Activated B cell treated with CpG ODN at 0.5 μM for 24 hours (primary cell): ENCODE measurements at regions of chr9 and their contacts with region 1.

Region 1: DNA sequence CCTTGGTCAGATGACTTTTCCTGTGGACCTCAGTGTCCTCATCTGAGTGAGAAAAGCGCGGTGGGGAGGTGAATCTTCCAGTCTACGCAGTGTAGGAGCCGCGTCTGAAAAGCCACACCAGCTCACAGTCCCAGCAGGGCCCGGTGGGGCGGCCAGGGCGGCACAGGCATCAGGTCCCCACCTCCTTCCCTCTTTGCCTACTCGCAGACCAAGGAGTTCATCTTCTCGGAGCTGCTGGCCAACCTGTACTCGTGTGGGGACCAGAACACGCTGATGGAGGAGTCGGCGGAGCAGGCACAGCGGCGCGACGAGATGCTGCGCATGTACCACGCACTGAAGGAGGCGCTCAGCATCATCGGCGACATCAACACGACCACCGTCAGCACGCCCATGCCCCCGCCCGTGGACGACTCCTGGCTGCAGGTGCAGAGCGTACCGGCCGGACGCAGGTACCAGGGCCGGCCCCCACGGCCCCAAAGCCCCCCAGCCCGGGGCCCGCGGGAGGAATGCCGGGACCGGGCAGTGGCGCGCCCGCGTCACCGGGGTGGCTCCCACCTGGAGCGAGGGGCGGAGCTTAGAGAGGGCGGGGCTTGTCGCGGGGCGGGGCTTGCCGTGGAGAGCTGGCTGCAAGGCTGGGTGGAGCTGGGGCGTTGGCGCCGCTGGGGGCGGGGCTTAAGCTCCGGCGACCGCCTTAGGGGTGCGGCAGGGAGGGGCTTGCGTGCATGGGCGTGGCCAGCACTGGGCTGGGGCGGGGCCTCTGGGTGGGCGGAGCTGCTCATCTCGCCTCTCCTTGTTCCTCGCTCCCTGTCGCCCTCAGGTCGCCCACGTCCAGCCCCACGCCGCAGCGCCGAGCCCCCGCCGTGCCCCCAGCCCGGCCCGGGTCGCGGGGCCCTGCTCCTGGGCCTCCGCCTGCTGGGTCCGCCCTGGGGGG is 25.6 kb downstream of the GOLGA2 start:
- DNase-seq: peak; percentile 99
- ATAC-seq: peak; percentile 98
- H3K4me3 Mint-ChIP-seq: peak overlapping the region; percentile 83
- H3K27ac Mint-ChIP-seq: peak overlapping the region; percentile 79
- H3K4me1 Mint-ChIP-seq: peaks cover 29% of the 10 kb centered on the region
- H3K27me3 Mint-ChIP-seq: peaks cover 1% of the 10 kb centered on the region
- CTCF ChIP-seq: no peak

Region 2: GRCh38 chr9:128159784-128160602 is 90.2 kb before region 1 on chr9 and contains the start of gene BBLN:
- CTCF ChIA-PET with region 1: no interaction called
- POLR2A ChIA-PET with region 1: interaction called, 5 read pairs
- intact Hi-C with region 1: loop called (anchors 1 kb)
- DNase-seq: peak; percentile 85
- ATAC-seq: peak; percentile 94
- H3K4me3 Mint-ChIP-seq: peak within 1 kb of the TSS; percentile 81
- H3K27ac Mint-ChIP-seq: peak within 1 kb of the TSS; percentile 81
- H3K4me1 Mint-ChIP-seq: peaks cover 13% of the 10 kb centered on the region
- H3K27me3 Mint-ChIP-seq: no peaks in the 10 kb centered on the region
- CTCF ChIP-seq: no peak
- total RNA-seq, gene BBLN: 47.7 and 53.6 TPM in 2 replicates

Region 3: DNA sequence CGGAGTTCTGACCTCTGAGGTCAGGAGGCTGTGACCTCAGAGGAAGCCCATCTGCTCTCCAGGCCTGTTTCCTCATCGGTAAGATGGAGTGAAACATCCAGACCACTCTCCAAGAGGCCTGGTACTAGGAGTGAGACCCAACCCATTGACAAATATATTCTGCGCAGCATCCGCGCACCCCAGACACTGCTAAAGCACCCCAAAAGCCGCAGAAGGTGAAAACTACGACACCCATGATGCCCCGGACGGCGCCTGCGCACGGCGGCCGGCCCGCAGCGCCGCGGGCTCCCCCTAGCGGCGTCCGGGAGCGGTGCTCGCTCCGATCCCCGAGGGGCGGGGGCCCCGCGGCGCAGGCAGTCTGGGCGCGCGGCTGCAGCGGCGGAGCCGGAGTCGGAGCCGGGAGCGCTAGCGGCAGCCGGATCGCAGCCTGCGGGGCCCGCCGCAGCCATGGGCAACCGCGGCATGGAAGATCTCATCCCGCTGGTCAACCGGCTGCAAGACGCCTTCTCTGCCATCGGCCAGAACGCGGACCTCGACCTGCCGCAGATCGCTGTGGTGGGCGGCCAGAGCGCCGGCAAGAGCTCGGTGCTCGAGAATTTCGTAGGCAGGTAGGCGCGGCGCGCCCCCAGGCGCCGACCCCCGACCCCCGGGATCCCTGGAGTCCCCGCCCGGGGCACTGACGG is 47.0 kb before region 1 on chr9 and contains the start of gene DNM1:
- CTCF ChIA-PET with region 1: no interaction called
- POLR2A ChIA-PET with region 1: no interaction called
- intact Hi-C with region 1: loop called (anchors 1 kb)
- DNase-seq: peak; percentile 78
- ATAC-seq: peak; percentile 98
- H3K4me3 Mint-ChIP-seq: peak within 1 kb of the TSS; percentile 85
- H3K27ac Mint-ChIP-seq: peak within 1 kb of the TSS; percentile 56
- H3K4me1 Mint-ChIP-seq: peaks cover 7% of the 10 kb centered on the region
- H3K27me3 Mint-ChIP-seq: peaks cover 18% of the 10 kb centered on the region
- CTCF ChIP-seq: peak; percentile 59
- total RNA-seq, gene DNM1: 0.81 and 0.86 TPM in 2 replicates

Region 4: DNA sequence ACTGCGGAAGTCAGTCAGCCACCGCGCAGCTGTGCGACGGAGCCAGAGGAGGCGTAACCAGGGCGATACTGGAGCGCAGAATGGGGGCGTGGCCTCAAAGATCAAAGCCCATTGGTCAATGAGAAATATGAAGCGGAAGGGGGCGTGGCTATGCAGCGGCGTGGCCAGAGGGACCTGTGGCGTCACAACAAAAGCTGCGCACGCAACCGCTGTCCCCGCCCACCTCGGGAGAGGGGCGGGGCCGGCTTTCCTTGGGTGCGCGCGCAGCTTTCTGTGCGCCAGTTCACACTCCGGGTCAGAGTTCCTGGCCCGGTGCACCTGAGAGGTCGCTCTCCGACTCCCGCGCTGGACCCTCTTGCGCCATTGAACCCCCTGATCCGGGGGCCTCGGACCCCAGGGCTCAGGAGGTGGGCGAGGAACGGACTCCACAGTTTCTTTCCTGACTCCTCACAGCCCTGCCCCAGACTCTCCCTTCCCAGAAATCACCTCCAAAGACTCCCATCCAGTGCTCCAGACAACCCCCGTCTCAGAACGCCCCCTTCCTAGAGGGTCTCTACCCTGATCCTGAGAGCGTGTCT is 25.9 kb after region 1 on chr9 and contains the starts of genes GOLGA2 and SWI5:
- CTCF ChIA-PET with region 1: interaction called, 3 read pairs
- POLR2A ChIA-PET with region 1: interaction called, 29 read pairs
- intact Hi-C with region 1: loop called (anchors 1 kb)
- DNase-seq: peak; percentile 96
- ATAC-seq: peak; percentile 95
- H3K4me3 Mint-ChIP-seq: peak within 1 kb of the TSS; percentile 97
- H3K27ac Mint-ChIP-seq: peak within 1 kb of the TSS; percentile 92
- H3K4me1 Mint-ChIP-seq: peaks cover 27% of the 10 kb centered on the region
- H3K27me3 Mint-ChIP-seq: no peaks in the 10 kb centered on the region
- CTCF ChIP-seq: no peak
- total RNA-seq, gene GOLGA2: 46.0 and 53.5 TPM in 2 replicates
- total RNA-seq, gene SWI5: 7.2 and 10.4 TPM in 2 replicates

Region 5: DNA sequence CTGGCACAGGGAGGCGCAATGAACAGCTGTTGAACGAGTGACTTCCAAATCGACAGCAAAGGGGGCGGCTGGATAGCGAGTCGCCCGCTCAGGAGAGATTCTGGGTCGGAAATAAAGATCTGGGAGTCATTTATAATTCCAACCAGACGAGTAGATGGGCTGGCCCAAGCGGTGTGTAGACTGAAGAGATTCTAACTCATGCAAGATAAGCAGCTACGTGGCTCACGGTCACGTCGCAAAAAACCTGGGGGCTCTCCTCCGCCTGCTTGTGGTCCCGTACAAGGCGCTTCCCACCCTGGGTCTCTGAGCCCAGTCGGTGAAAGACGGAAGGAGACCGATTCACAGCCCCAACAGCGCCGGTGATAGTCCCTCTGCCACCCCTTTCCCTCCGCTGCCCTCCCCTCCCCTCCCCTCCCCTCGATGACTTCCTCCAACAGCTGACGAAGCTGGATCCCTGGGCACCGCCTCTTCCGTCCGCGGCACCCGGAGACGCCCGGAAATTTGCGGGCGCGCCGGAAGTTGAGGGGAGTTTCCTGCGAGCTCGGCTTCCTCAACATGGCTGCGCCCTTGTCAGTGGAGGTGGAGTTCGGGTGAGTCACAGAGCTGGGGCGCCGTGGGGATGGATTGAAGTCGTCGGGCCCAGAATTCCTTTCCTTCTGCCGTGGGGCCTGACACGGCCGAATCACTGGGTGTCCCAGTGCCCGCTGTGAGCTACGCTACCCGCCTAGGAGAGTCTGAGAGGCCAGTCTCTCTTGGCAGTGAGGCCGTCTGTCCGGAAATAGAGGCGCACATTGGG is 120.9 kb after region 1 on chr9 and contains the start of gene URM1:
- CTCF ChIA-PET with region 1: no interaction called
- POLR2A ChIA-PET with region 1: no interaction called
- intact Hi-C with region 1: loop called (anchors 1 kb)
- DNase-seq: peak; percentile 96
- ATAC-seq: peak; percentile 91
- H3K4me3 Mint-ChIP-seq: peak within 1 kb of the TSS; percentile 97
- H3K27ac Mint-ChIP-seq: peak within 1 kb of the TSS; percentile 94
- H3K4me1 Mint-ChIP-seq: peaks cover 31% of the 10 kb centered on the region
- H3K27me3 Mint-ChIP-seq: no peaks in the 10 kb centered on the region
- CTCF ChIP-seq: no peak
- total RNA-seq, gene URM1: 55.8 and 65.1 TPM in 2 replicates